ENCODE measurements at regions of chr12 and their contacts with region 1.

Region 1: DNA sequence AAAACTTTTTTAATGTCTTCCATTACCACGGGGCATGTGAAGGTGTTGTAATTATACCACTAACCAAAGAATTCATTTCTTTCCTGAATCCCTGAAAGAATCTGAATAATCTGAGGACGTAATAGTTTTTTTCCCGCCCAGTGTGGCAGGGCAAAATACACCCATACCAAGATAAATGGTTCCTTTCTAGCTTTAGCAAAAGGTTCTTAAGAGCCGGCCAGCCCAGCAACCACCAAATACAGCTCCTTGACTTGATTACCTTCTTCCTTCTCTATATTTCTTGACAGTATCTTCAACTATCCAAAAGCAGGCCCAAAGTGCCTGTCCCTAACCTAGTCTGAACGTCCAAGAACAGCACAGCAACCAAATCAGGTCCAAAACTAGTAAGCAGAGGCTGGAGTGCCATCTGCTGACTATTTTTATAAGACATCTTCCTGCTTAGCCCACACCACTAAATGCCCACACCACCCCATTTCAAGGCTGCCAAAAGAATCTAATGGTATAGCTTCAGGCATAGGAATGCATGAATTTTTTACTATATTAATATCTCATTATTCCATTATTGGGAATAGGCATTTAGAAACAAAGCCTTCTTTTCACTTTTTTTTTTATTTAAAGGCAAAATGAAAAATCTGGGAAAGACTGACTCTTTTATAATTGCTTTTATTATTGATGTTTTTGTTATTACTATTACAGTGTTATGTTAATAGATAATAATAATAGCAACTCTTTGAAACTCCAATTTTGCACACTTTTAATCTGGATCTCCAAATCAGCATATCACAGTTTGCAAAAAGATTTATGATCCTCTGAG is 524.4 kb downstream of the MED13L start:
- DNase-seq: no peak
- ATAC-seq: peak; percentile 87 to 95 (median 94)
- H3K4me3 ChIP-seq: no peak overlapping the region
- H3K27ac ChIP-seq: no peak overlapping the region
- H3K4me1 ChIP-seq: no peaks in the 10 kb centered on the region
- H3K27me3 ChIP-seq: peaks cover 0 to 9% of the 10 kb centered on the region in 2 donors
- CTCF ChIP-seq: peak; percentile 54 to 69 (median 62)
- POLR2A ChIP-seq: no peak

Region 2: DNA sequence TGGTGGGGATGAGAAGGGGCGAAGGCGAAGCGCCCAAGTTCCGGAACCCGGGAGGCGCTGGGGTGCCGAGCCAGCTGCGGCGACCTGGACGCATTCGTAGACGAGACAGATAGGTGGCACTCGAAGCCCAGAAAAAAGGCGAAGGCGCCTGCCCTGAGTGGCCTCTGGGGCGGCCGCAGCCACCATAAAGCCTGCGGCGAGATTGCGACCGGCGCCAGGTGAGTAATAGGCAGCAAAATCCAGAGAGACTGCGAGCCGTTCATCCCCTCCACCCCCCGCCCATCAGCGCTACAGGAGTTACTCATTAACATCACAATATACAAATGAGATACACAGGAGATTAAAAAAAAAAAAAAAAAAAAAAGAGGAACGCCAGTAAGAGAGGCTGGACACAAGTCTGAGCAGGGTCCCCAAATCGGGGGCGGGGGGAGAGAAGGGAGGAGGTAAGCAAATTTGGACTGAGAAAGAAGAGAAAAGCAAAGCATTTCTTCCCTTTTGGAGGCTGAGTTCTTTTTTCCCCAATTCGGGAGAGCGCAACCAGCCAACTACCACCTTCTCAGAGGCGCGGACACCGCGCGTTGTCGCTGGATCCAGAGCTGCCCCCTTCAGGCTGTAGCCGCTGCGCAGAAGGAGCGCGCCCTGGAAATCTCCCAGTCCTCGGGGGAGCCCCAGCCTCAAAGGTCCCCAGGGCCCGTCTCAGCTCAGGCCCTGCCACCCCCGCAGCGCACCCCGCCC is 1084.8 kb before region 1 on chr12:
- intact Hi-C with region 1: loop called in 1 of 2 experiments (anchors 5 kb)
- DNase-seq: peak; percentile 87 to 92 (median 92)
- ATAC-seq: peak; percentile 89 to 93 (median 91)
- H3K4me3 ChIP-seq: peak overlapping the region; percentile 32 to 57 (median 46)
- H3K27ac ChIP-seq: peak overlapping the region in 2 of 3 donors; percentile 65 to 83
- H3K4me1 ChIP-seq: peaks cover 0 to 19% (median 0%) of the 10 kb centered on the region in 4 donors
- H3K27me3 ChIP-seq: peaks cover 0 to 6% of the 10 kb centered on the region in 2 donors
- CTCF ChIP-seq: peak; percentile 55 to 71 (median 56)
- POLR2A ChIP-seq: no peak